Activated naive CD4-positive, alpha-beta T cell treated with anti-CD3 and anti-CD28 coated beads for 36 hours (primary cell): ENCODE measurements at regions of chr13 and their contacts with region 1.

Region 1: DNA sequence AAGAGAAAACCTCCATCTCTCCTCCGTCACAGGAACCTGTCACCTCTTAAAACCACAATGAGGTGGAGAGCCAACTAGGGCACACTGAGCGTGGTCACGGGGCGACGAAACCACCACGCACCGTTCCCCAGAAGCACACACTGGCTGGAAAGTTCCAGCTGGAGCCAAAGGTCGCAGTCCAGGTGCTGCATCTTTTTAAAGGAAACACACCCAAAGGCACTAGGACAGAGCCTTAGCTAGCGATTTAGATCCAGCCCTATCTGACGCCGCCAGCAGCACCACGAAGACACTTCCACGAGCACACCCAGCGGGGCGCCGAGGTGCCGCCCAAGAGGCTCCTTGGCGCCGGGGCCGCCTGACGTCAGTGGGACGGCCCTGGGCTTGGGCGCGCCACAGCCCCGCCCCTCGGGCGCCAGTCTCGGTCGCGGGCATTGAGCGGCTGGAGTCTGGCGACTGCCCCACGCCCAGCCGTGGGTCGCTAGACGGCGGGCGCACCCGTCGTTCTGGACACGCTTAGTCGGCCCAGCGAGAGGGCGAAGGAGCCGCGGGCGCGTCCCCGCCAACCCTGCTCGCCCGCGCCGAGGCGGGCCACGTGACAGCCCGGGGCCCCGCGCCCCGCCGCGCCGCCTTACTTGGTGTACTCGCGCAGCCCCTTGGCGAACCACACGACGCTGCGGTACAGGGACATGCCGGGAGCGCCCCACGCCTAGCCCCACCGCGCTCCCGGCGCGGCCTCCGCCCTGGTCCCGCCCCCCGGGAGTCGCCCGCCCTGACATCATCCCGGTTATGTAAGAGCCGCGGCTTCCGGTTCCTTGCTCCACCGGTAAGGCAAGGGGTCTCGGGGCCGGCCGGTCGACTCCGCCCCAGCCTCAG is at the start of gene DHRS12:
- DNase-seq: peak; percentile 89
- H3K4me3 Mint-ChIP-seq: peak within 1 kb of the TSS; percentile 92
- H3K27ac Mint-ChIP-seq: peak within 1 kb of the TSS; percentile 98
- H3K4me1 Mint-ChIP-seq: peaks cover 57% of the 10 kb centered on the region
- H3K27me3 Mint-ChIP-seq: no peaks in the 10 kb centered on the region
- total RNA-seq, gene DHRS12: 4.1 to 4.9 TPM

Region 2: GRCh38 chr13:50236898-50237318 is 1566.8 kb before region 1 on chr13:
- CTCF ChIA-PET with region 1: no interaction called
- intact Hi-C with region 1: loop called (anchors 5 kb)
- DNase-seq: peak; percentile 62
- H3K4me3 Mint-ChIP-seq: no peak overlapping the region
- H3K27ac Mint-ChIP-seq: peak overlapping the region; percentile 61
- H3K4me1 Mint-ChIP-seq: peaks cover 48% of the 10 kb centered on the region
- H3K27me3 Mint-ChIP-seq: peaks cover 12% of the 10 kb centered on the region

Region 3: DNA sequence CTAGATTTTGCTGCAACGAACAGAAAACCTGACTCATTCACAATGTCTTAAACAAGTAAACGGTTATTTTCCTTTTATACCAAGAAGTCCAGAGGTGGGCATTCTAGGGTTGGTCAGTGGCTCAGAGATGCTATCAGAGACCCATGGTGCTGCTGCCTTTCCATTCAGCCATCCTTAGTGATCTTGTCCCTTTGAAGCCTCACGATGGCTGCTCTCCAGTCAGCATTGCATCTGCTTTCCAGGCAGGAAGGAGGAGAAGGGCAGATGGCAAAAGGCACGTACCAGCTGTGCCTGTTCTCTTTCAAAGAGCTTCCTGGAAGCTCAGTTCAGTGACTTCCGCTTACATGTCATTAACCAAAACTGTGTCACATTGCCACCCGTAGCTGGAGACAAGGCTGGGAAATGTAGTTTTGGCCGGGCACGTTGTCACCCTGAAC is 189.3 kb before region 1 on chr13:
- CTCF ChIA-PET with region 1: interaction called, 4 read pairs
- intact Hi-C with region 1: loop called (anchors 1 kb)
- DNase-seq: peak; percentile 78
- H3K4me3 Mint-ChIP-seq: peak overlapping the region; percentile 74
- H3K27ac Mint-ChIP-seq: peak overlapping the region; percentile 96
- H3K4me1 Mint-ChIP-seq: peaks cover 18% of the 10 kb centered on the region
- H3K27me3 Mint-ChIP-seq: no peaks in the 10 kb centered on the region

Region 4: DNA sequence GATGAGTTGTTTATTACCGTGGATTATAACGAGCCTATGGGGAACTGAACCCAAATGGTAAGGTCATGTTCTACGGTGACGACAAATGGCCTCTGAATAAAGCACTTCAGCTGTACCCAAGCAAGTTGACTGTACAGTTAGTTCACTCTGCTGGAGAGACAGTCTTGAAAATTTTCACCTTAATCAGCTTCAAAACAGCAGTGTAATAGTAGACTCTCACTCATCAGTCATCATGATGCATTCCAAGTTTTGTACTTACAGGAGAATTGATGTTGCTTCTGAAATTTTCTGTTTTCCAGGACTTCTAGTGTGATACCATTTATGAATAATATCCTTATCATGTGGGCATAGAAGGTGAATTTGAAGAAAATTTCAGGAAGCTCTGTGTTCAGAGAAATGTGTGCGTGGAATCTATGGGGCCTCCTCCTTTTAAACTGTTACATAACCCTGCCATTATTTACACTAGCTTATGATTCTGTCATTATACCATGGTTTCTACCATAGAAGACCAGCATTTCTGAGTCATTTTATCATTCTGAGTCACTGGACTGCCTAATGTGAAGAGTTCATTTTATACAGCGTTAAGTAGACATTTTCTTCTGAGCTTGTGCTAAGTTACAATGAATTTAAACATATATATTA is 122.5 kb before region 1 on chr13:
- CTCF ChIA-PET with region 1: no interaction called
- intact Hi-C with region 1: no loop called
- DNase-seq: no peak
- H3K4me3 Mint-ChIP-seq: no peak overlapping the region
- H3K27ac Mint-ChIP-seq: no peak overlapping the region
- H3K4me1 Mint-ChIP-seq: peaks cover 13% of the 10 kb centered on the region
- H3K27me3 Mint-ChIP-seq: no peaks in the 10 kb centered on the region

Region 5: GRCh38 chr13:51825165-51825592 is 21.5 kb after region 1 on chr13:
- CTCF ChIA-PET with region 1: interaction called, 14 read pairs
- intact Hi-C with region 1: loop called (anchors 1 kb)
- DNase-seq: no peak
- H3K4me3 Mint-ChIP-seq: peak overlapping the region; percentile 77
- H3K27ac Mint-ChIP-seq: peak overlapping the region; percentile 98
- H3K4me1 Mint-ChIP-seq: peaks cover 84% of the 10 kb centered on the region
- H3K27me3 Mint-ChIP-seq: no peaks in the 10 kb centered on the region

Region 6: GRCh38 chr13:52011632-52012511 is 208.2 kb after region 1 on chr13 and contains the start of gene ALG11:
- CTCF ChIA-PET with region 1: no interaction called
- intact Hi-C with region 1: loop called (anchors 1 kb)
- DNase-seq: peak; percentile 100
- H3K4me3 Mint-ChIP-seq: peak within 1 kb of the TSS; percentile 98
- H3K27ac Mint-ChIP-seq: peak within 1 kb of the TSS; percentile 85
- H3K4me1 Mint-ChIP-seq: peaks cover 14% of the 10 kb centered on the region
- H3K27me3 Mint-ChIP-seq: peaks cover 10% of the 10 kb centered on the region
- total RNA-seq, gene ALG11: 12.6 to 15.6 TPM